ENCODE measurements at regions of chr9 and their contacts with region 1.

Region 1: DNA sequence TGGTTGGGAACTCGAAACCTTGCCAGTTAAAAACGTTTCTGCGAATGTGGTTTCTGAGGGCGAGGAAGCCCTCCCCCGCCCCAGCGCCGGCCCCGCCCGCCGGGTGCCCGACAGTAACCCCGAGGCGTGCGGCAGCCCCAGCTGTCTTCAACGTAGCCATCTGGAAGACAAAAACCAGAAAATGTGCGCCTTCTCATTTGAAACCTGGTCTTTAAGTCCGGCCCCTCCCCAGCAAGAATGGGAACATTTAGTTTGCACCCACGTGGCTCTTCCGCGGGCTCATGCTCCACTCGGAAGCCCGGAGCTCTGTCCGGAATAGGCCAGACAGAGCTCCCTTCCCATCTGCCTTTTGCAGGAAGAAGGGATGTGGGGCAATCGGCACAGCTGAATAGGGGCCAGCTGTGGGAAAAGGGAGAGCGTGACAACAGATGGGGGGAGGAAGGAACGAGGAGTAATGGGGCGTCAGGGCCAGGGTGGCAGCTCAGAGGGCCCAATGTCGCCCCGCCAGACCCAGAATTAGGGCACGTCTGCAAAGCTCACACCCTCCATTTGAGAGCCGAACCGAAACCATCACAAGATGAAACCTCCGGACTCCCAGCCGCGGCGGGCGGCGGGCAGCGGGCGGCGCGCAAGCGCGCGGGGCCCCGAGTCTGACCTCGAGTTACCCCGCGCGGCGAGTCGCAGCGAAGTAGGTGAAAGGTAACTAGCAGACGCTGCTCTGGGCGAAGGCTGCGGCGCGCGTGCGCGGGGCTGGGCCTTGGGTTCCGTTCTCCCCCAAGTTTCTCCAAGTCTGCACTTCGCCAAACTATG is 63.4 kb upstream of the ABCA1 start:
- DNase-seq: peak; percentile 93 to 97
- ATAC-seq: peak; percentile 87 to 91 (median 90)
- H3K4me3 ChIP-seq: peak overlapping the region; percentile 76
- H3K27ac ChIP-seq: peak overlapping the region; percentile 98
- H3K4me1 ChIP-seq: peaks cover 30% of the 10 kb centered on the region
- H3K27me3 ChIP-seq: no peaks in the 10 kb centered on the region
- CTCF ChIP-seq: no peak

Region 2: DNA sequence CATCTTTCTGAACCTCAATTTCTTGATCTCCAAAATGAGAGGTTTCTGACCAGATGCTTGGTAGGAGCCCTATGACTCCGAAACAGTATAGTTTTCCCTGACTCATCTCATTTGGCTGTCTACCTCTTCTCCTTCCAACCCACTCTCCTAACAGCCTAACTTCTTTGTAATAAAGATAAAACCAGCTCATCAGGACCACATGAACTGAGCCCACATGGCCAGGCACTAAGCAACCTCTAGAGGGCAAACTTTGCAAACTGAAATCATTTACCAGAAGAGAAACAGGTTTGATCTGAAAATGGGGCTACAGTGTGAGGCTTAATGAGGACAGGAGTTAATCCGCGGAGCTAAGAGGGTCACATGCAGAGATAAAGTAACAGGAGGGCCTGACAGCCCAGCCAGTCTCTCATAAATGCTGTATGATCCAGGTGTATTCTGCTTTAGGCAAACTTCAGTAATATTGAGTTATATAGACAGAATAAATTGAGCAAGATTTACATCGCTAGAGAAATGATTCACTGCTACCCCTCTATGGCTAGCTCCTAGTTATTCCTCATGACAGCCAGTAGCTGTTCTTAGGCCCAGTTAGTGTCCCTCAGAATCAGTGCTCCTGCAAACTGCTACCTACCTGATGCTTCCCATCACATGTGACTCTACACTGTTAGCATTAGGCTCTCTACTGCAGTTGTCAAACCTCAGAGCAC is 128.0 kb before region 1 on chr9:
- intact Hi-C with region 1: loop called in 1 of 2 experiments (anchors 10 kb)
- DNase-seq: no peak
- ATAC-seq: peak; percentile 45 to 87 (median 75)
- H3K4me3 ChIP-seq: no peak overlapping the region
- H3K27ac ChIP-seq: peak overlapping the region; percentile 40
- H3K4me1 ChIP-seq: peaks cover 37% of the 10 kb centered on the region
- H3K27me3 ChIP-seq: no peaks in the 10 kb centered on the region
- CTCF ChIP-seq: peak; percentile 79

Region 3: GRCh38 chr9:104968025-104968982 is 23.0 kb before region 1 on chr9:
- intact Hi-C with region 1: loop called in 1 of 2 experiments (anchors 1 kb)
- DNase-seq: peak; percentile 92 to 94
- ATAC-seq: peak; percentile 91 to 96 (median 92)
- H3K4me3 ChIP-seq: peak overlapping the region; percentile 94
- H3K27ac ChIP-seq: peak overlapping the region; percentile 99
- H3K4me1 ChIP-seq: peaks cover 18% of the 10 kb centered on the region
- H3K27me3 ChIP-seq: no peaks in the 10 kb centered on the region
- CTCF ChIP-seq: no peak

Region 4: GRCh38 chr9:105064315-105065097 is 73.2 kb after region 1 on chr9:
- intact Hi-C with region 1: loop called in 1 of 2 experiments (anchors 2 kb)
- DNase-seq: peak; percentile 91 to 97
- ATAC-seq: peak; percentile 95 to 97 (median 96)
- H3K4me3 ChIP-seq: peak overlapping the region; percentile 33
- H3K27ac ChIP-seq: peak overlapping the region; percentile 88
- H3K4me1 ChIP-seq: peaks cover 21% of the 10 kb centered on the region
- H3K27me3 ChIP-seq: no peaks in the 10 kb centered on the region
- CTCF ChIP-seq: no peak

Region 5: GRCh38 chr9:105114964-105115728 is 123.8 kb after region 1 on chr9:
- intact Hi-C with region 1: loop called in 1 of 2 experiments (anchors 5 kb)
- DNase-seq: peak; percentile 31 to 66
- ATAC-seq: peak; percentile 48 to 74 (median 60)
- H3K4me3 ChIP-seq: no peak overlapping the region
- H3K27ac ChIP-seq: peak overlapping the region; percentile 81
- H3K4me1 ChIP-seq: peaks cover 24% of the 10 kb centered on the region
- H3K27me3 ChIP-seq: no peaks in the 10 kb centered on the region
- CTCF ChIP-seq: no peak

Region 6: GRCh38 chr9:105157130-105157583 is 165.8 kb after region 1 on chr9:
- intact Hi-C with region 1: loop called in 1 of 2 experiments (anchors 10 kb)
- DNase-seq: peak; percentile 47 to 69
- ATAC-seq: peak; percentile 82 to 95 (median 89)
- H3K4me3 ChIP-seq: no peak overlapping the region
- H3K27ac ChIP-seq: no peak overlapping the region
- H3K4me1 ChIP-seq: peaks cover 5% of the 10 kb centered on the region
- H3K27me3 ChIP-seq: no peaks in the 10 kb centered on the region
- CTCF ChIP-seq: peak; percentile 52

Measured in psoas muscle (tissue), 8 donors.